Right ventricle myocardium inferior (tissue), 1 donor: ENCODE measurements at regions of chr20 and their contacts with region 1.

Region 1: DNA sequence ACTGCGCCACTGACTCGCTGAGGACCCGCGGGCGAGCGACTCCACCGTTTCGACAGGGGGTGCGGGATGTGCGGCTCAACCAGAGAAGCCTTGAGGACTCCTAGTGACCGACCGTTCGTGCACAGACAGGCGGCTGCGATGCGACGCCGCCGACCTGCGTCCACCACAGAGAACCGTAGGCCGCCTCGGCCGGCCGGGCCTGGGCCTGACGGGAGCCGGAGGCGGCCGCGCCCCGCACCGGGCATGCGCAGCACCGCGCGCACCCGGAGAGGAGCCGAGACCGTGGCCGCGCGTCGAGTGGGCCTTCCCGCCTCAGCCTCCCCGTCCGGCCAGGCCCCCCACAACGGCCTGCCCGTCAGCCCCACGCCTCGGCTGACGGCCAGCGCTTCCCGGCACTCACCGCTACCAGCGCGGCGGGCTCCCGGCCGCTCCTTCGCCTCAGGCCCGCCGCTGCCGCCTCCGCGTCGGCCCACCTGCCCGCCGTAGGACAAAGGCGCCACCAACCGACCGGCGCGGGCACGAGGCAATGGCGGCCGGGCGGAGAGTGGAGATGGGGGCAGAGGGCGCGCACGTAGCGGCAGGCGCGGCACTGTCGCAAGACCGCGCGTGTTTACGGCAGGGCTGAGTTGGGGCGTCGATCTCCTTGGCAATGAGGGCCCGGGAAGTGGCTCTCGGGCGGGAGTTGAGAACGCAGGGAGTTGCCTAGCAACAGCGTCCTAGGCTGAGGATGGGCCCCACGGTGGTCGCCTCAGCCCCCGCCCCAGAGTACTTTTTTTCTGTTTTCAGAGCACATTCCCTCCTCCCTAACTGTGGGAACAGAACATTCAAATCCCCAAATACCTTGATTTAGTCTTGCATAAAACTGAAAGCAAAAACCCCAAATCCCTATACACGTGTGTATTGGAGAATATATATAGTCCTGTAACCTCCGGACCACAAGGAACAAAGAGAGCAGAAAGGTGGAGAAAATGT is at the start of gene NCOA5:
- DNase-seq: peak; percentile 97
- ATAC-seq: peak; percentile 97
- total RNA-seq, gene NCOA5: 19.4 TPM

Region 2: DNA sequence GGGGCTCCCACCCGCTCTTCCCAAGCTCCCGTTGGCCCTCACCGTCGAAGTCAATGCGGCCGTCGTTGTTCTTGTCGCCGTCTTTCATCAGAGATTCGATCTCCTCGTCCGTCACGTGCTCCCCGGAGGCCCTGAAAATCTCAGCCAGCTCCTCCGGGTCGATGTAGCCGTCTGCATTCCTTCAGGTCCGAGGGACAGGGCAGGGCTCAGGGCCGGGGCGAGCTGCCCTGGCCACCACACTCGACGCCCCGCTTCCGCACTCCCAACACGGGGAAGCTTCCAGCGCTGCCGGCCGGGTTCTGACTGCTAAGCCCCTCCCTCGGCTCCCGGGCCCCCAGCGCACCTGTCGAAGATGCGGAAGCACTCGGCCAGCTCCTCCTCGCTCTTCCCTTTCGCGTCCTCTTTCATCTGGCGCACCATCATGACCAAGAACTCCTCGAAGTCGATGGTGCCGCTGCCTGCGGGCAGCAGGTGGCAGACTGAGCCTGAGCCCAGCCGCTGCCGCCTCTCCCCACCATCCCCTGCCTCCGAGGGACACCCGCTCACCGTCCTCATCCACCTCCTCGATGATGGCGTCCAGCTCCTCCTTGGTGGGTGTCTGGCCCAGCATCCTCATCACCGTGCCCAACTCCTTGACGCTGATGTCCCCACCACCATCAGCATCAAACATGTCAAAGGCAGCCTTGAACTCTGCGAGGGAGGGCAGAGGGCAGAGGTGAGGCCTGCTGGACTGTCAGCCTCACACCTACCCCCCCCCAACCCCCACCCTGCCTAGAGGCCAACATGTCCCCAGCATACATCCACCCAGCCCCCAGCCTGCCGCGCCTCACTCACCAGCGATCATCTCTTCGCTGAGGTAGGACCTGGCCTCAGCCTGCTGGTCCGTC is 265.5 kb before region 1 on chr20:
- intact Hi-C with region 1: loop called (anchors 10 kb)
- DNase-seq: peak; percentile 76
- ATAC-seq: peak; percentile 72